SK-N-SH (cell line): ENCODE measurements at regions of chr11 and their contacts with region 1.

Region 1: DNA sequence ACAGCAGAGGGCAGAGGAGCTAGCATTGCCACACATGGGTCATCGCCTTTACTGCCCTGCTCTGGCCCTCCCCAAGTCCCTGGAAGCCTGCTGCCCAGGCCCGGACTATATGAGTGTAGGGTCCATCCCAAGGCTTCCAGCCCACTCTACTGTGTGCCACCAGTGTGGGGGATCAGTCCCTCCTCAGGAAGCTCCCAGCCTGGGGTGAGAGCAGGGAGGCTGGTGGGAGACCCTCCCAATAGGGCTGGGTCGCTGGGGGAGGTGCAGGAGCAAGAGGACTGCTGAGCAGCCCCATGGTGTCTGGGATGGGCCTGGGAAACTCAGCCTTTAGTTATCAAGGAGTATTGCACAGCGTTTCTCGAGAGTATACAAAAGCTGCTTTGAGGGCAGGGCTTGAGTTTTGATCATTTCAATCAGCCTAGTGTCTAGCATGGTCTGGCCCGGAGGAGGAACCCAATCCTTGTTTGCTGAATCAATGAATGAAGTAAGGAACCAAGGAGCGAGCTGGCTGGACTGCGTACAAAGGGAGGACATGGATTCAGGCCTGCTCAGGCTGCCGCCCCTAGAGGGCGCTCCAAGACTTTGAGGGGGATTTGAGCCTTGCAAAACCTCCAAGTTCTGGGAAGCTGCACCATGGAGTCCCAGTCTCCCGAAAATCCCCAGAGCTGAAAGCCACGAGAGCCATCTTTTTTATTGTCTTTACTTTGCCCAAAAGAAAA is 89.0 kb upstream of the PARVA start:
- DNase-seq: peak; percentile 90
- H3K4me3 ChIP-seq: no peak overlapping the region; a peak in 2 of 4 replicates
- H3K27ac ChIP-seq: peak overlapping the region; percentile 51 to 100
- H3K4me1 ChIP-seq: peaks cover 25 to 39% of the 10 kb centered on the region in 2 experiments
- H3K27me3 ChIP-seq: no peaks in the 10 kb centered on the region
- CTCF ChIP-seq: peak; percentile 99
- EP300 ChIP-seq: no peak
- RAD21 ChIP-seq: peak; percentile 96

Region 2: DNA sequence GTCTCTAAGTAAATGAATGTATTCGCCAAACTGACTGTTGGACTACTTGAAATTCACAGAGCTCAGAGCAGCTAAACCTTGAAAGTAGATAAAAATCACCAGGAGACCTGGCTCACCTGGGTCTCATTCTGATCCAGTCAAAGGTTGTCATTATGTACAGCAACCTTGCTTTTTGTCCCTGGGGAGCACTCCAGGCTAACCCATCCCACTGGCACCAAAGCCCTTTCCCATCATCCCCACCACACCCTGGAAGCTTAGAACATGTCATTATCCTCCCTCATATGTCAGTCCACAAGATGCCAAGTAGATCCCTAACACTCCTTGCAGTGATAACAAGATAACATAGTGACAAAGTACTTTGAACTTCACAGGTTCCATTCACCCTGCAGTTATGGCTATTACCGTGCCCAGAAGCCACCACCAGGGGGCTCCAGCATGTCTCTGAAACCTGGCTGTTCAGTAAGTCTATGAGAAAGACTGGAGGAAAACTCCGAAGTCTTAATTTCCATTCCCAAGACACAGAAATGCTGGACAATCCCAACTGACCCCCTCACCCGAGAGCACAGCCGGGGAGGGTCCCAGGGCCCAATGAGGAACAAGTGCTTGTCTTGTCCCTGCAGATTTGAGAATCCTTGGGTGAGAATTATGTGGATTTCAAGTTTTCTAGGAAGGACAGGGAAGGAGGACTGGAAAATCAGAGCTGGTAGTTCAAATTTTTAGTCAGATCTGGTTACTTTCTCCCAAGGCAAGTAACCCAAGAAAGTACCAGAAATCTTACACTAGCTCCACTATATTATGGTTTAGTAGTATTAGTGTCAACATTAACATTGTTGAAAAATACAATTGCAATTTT is 489.6 kb before region 1 on chr11:
- CTCF ChIA-PET with region 1: interaction called, 11 read pairs
- POLR2A ChIA-PET with region 1: no interaction called
- DNase-seq: peak; percentile 60
- H3K4me3 ChIP-seq: no peak overlapping the region; a peak in 1 of 4 replicates
- H3K27ac ChIP-seq: no peak overlapping the region
- H3K4me1 ChIP-seq: no peaks in the 10 kb centered on the region
- H3K27me3 ChIP-seq: no peaks in the 10 kb centered on the region; the same call in 1 of the 2 replicates
- CTCF ChIP-seq: peak; percentile 96
- EP300 ChIP-seq: no peak
- RAD21 ChIP-seq: peak; percentile 84

Region 3: GRCh38 chr11:12303421-12304149 is 15.2 kb after region 1 on chr11:
- CTCF ChIA-PET with region 1: interaction called, 40 read pairs
- POLR2A ChIA-PET with region 1: no interaction called
- DNase-seq: no peak
- H3K4me3 ChIP-seq: no peak overlapping the region
- H3K27ac ChIP-seq: no peak overlapping the region
- H3K4me1 ChIP-seq: no peaks in the 10 kb centered on the region
- H3K27me3 ChIP-seq: no peaks in the 10 kb centered on the region
- CTCF ChIP-seq: no peak
- EP300 ChIP-seq: no peak
- RAD21 ChIP-seq: no peak

Region 4: GRCh38 chr11:12331239-12331874 is 43.0 kb after region 1 on chr11:
- CTCF ChIA-PET with region 1: interaction called, 139 read pairs
- POLR2A ChIA-PET with region 1: no interaction called
- DNase-seq: peak; percentile 70
- H3K4me3 ChIP-seq: peak overlapping the region in 1 of 2 experiments; percentile 34; a peak in 1 of 4 replicates
- H3K27ac ChIP-seq: no peak overlapping the region; a peak in 1 of 4 replicates
- H3K4me1 ChIP-seq: peaks cover 10 to 16% of the 10 kb centered on the region in 2 experiments; a peak in 3 of 4 replicates
- H3K27me3 ChIP-seq: no peaks in the 10 kb centered on the region
- CTCF ChIP-seq: peak; percentile 85
- EP300 ChIP-seq: no peak
- RAD21 ChIP-seq: peak; percentile 99

Region 5: DNA sequence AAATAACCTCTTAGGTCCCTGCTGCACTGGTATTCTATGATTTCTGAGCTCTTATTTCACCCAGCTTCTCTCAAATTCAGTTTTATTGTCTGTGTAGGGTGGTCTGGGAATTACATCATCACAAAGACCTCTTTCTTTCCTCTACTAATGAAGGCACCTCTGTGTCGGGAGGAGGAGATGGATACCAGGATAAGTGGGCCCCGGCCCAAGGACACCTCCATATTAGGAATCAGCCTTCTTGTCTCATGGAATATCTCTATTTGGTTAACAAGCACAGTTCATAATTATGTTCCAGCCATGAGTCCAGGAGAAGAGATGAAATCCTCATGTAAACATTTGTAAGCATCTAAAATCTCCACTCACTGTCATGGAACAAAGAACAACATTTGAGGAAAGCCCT is 98.4 kb after region 1 on chr11:
- CTCF ChIA-PET with region 1: interaction called, 11 read pairs
- POLR2A ChIA-PET with region 1: no interaction called
- DNase-seq: no peak
- H3K4me3 ChIP-seq: no peak overlapping the region
- H3K27ac ChIP-seq: peak overlapping the region in 1 of 2 experiments; percentile 34; a peak in 1 of 4 replicates
- H3K4me1 ChIP-seq: peaks cover 27 to 33% of the 10 kb centered on the region in 2 experiments; a peak in 2 of 4 replicates
- H3K27me3 ChIP-seq: no peaks in the 10 kb centered on the region
- CTCF ChIP-seq: no peak
- EP300 ChIP-seq: no peak
- RAD21 ChIP-seq: no peak

Region 6: DNA sequence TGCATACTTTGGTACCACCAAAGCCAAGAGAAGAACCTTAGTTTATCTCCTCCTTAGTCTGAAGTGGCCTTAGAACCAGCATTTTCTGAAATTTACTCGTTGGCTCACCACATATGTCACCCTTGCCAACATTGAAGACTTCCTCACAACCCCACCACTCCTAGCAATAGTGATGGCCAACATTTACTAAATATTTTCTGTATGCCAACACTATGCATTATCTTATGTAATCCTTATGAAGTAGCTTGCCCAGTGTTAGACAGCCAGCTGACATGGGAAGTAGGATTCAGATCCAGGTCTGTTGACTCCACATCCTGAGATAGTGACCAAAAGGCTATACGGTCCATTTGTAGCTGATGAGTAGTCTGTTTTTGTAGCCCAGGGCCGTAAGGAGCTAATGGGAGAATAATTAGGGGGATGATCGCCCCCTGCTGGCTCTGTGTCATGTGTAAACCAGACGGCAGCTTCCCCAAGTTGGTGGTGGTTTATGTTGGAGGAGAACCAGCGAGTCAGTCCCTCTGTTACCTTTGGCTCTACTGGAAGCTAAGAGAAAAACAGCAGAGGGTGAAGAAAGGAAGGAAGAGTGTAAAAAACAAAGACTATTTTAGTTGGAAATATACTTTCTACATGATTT is 600.3 kb after region 1 on chr11:
- CTCF ChIA-PET with region 1: interaction called, 91 read pairs
- POLR2A ChIA-PET with region 1: no interaction called
- DNase-seq: peak; percentile 76
- H3K4me3 ChIP-seq: no peak overlapping the region
- H3K27ac ChIP-seq: peak overlapping the region; percentile 23 to 58; a peak in 2 of 4 replicates
- H3K4me1 ChIP-seq: peaks cover 16 to 41% of the 10 kb centered on the region in 2 experiments
- H3K27me3 ChIP-seq: no peaks in the 10 kb centered on the region
- CTCF ChIP-seq: peak; percentile 88
- EP300 ChIP-seq: no peak
- RAD21 ChIP-seq: peak; percentile 90

Region 7: GRCh38 chr11:12914400-12914912 is 626.1 kb after region 1 on chr11:
- CTCF ChIA-PET with region 1: interaction called, 11 read pairs
- POLR2A ChIA-PET with region 1: no interaction called
- DNase-seq: peak; percentile 82
- H3K4me3 ChIP-seq: peak overlapping the region in 1 of 2 experiments; percentile 41; a peak in 1 of 4 replicates
- H3K27ac ChIP-seq: peak overlapping the region in 1 of 2 experiments; percentile 68; a peak in 2 of 4 replicates
- H3K4me1 ChIP-seq: peaks cover 0 to 14% of the 10 kb centered on the region in 2 experiments; a peak in 1 of 4 replicates
- H3K27me3 ChIP-seq: no peaks in the 10 kb centered on the region
- CTCF ChIP-seq: peak; percentile 64
- EP300 ChIP-seq: no peak
- RAD21 ChIP-seq: peak; percentile 49